ENCODE measurements at regions of chr3 and their contacts with region 1.

Region 1: GRCh38 chr3:11379233-11379823 is 107.1 kb downstream of the ATG7 start:
- DNase-seq: no peak
- H3K4me3 ChIP-seq: peak overlapping the region; percentile 17 to 32
- H3K27ac ChIP-seq: peak overlapping the region; percentile 63 to 68
- H3K4me1 ChIP-seq: peaks cover 0 to 15% (median 5%) of the 10 kb centered on the region in 4 donors
- H3K27me3 ChIP-seq: no peaks in the 10 kb centered on the region
- CTCF ChIP-seq: peak; percentile 56 to 82

Region 2: DNA sequence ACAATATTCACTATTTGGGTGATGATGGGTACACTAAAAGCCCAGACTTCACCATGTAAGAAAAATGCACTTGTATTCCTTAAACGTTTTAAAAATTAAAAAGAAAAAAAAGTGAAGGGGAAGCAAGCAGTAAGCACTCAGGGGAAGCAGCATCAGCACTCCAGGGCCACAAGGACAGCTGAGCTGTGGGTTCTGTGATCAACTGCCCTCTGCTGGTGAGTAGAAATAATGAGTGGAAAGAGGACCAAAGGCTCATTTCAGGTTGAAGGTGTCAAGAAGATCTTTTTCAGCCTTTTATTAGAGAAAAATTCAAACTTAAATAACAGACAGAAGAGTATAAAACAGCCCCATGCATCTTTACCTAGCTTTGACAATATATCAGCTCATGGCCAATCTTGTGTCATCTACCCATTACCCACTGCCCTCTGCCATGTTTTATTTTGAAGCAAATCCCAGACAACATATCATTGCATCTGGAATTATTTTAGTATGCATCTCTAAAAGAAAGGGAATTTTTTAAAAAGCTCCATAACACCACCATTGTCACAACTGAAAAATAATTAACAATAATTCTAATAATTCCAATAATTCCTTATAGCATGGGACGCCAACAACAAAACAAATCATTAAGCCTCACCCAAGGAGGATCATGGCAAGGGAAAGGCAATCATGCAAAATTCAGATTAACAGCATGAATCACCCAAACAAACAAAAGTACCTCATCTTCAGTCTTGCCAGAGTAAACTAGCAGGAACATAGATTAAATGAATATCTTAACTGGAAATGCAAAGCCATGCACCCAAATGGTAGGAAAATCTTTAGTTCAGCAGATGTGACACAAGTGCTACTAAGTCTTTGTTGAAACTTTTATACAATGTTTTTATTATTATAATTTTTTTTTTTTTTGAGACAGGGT is 424.9 kb after region 1 on chr3:
- intact Hi-C with region 1: loop called (anchors 5 kb)
- DNase-seq: peak in 1 of 2 donors; percentile 24
- H3K4me3 ChIP-seq: no peak overlapping the region
- H3K27ac ChIP-seq: no peak overlapping the region
- H3K4me1 ChIP-seq: no peaks in the 10 kb centered on the region
- H3K27me3 ChIP-seq: no peaks in the 10 kb centered on the region
- CTCF ChIP-seq: peak; percentile 70 to 80